Lower lobe of right lung (tissue), 2 donors: ENCODE measurements at regions of chr1 and their contacts with region 1.

Region 1: DNA sequence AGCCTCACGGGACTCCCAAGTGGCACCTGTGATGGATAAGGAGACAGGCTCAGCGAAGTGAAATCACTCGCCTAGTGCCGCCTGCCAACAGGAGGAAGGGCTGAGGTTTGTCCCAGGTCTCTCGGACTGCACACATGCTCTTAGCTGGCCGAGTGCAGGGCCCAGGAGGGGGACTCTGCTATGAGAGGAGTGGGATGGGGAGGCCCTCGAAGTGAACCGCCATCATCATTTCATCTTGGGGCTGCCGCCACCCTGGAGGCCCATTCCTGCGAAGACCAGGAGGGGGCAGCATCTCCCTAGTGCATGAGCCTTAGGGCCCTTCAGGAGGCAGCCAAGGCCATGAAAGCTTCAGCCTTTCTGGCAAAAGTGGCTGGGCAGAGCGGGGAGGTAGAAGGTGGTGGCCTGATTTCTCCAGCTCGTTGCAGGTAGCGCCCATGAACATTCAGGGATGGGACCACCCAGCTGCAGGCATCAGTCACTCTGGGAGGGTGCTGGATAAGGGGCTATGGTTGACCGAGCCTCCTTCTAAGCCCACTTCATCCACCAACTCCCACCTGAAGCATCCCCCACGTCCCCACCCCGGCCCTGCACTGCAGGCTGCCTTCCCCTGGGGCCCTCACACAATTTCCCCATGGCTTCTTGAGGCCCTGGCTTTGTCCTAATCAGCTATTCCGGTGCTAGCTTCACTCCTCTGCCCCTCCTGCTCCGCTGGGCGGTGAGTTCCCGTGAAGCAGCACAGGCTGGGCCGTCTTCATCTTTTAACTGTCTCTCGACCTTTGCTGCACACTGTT is 17.2 kb upstream of the RASSF5 start:
- DNase-seq: peak; percentile 81
- ATAC-seq: peak; percentile 91
- H3K4me3 ChIP-seq: no peak overlapping the region
- H3K27ac ChIP-seq: no peak overlapping the region
- H3K4me1 ChIP-seq: peaks cover 15% of the 10 kb centered on the region
- H3K27me3 ChIP-seq: no peaks in the 10 kb centered on the region
- CTCF ChIP-seq: peak; percentile 94

Region 2: GRCh38 chr1:206583707-206584648 is 93.8 kb after region 1 on chr1:
- intact Hi-C with region 1: loop called (anchors 10 kb)
- DNase-seq: peak; percentile 81
- ATAC-seq: peak; percentile 63 to 74
- H3K4me3 ChIP-seq: no peak overlapping the region
- H3K27ac ChIP-seq: no peak overlapping the region
- H3K4me1 ChIP-seq: peaks cover 68% of the 10 kb centered on the region
- H3K27me3 ChIP-seq: no peaks in the 10 kb centered on the region
- CTCF ChIP-seq: peak; percentile 93